ENCODE measurements at regions of chr19 and their contacts with region 1.

Region 1: DNA sequence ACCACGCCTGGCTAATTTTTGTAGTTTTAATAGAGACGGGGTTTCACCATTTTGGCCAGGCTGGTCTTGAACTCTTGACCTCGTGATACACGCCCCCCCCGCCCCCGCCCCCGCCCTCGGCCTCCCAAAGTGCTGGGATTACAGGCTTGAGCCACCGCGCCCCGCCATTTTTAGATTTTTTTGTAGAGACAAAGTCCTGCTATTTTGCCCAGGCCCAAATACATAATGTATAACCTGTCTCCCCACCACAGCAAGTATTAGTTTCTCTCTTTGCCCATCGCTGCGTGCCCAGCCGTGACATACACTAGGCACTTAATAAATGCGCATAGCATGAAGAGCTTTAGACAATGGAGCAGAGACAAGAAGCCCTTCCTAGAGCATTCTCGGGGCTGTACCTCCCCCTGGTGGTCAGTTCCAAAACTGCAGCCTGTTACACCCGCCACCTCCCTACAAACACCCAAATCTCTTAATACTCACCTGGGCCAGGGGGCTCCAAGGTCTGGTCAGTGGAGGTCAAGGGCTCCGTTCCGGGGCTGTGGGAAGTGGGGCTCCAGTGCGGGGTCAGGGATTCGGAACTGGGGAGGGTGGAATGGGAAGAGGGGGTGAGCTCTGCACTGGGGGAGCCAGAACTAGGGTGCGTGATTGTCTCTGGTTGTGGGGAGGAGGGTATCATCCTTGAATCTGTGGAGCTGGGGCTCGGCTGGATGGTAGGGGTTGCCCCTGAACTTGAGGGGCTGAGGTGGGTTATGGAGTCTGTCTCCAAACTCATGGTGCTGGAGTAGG is 22.5 kb downstream of the IQCN start:
- DNase-seq: peak; percentile 88
- H3K4me3 Mint-ChIP-seq: no peak overlapping the region
- H3K27ac Mint-ChIP-seq: peak overlapping the region; percentile 6
- H3K4me1 Mint-ChIP-seq: peaks cover 4% of the 10 kb centered on the region
- H3K27me3 Mint-ChIP-seq: peaks cover 14% of the 10 kb centered on the region

Region 2: GRCh38 chr19:18192673-18193387 is 58.9 kb before region 1 on chr19 and contains the start of gene MPV17L2:
- CTCF ChIA-PET with region 1: interaction called, 23 read pairs
- POLR2A ChIA-PET with region 1: interaction called, 3 read pairs
- intact Hi-C with region 1: no loop called
- DNase-seq: peak; percentile 99
- H3K4me3 Mint-ChIP-seq: peak within 1 kb of the TSS; percentile 86
- H3K27ac Mint-ChIP-seq: peak within 1 kb of the TSS; percentile 87
- H3K4me1 Mint-ChIP-seq: peaks cover 21% of the 10 kb centered on the region
- H3K27me3 Mint-ChIP-seq: no peaks in the 10 kb centered on the region
- total RNA-seq, gene MPV17L2: 6.4 to 7.3 TPM

Region 3: GRCh38 chr19:18233224-18233825 is 18.5 kb before region 1 on chr19:
- CTCF ChIA-PET with region 1: interaction called, 23 read pairs
- POLR2A ChIA-PET with region 1: no interaction called
- intact Hi-C with region 1: no loop called
- DNase-seq: peak; percentile 67
- H3K4me3 Mint-ChIP-seq: no peak overlapping the region
- H3K27ac Mint-ChIP-seq: no peak overlapping the region
- H3K4me1 Mint-ChIP-seq: peaks cover 3% of the 10 kb centered on the region
- H3K27me3 Mint-ChIP-seq: peaks cover 56% of the 10 kb centered on the region

Region 4: DNA sequence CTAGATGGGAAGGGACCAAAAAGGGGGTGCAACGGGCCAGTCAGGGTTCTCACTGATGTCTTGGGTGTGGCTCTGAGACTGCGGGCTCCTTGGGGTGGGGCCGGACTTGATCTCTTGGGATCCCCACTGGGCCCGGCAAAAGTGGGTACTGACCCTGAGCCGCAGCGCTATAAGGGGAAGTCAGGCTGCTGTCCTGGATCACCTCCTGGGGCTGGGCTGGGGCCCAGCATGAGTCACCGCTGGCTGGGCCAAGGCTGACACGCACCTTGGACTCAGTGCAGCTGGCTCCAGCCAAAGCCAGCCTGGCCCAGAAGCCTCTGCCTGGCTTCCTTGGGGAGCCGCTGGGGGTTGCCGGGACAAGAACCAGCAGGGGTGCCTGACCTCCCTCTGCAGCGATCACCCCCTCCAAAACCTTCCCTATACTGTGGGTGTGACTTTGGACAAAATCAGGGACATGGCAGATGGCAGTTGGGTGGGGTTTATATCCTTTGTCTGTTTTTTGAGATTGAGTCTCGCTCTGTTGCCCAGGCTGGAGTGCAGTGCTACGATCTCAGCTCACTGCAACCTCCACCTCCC is 23.1 kb after region 1 on chr19:
- CTCF ChIA-PET with region 1: interaction called, 12 read pairs
- POLR2A ChIA-PET with region 1: interaction called, 4 read pairs
- intact Hi-C with region 1: no loop called
- DNase-seq: no peak
- H3K4me3 Mint-ChIP-seq: no peak overlapping the region
- H3K27ac Mint-ChIP-seq: peak overlapping the region; percentile 23
- H3K4me1 Mint-ChIP-seq: peaks cover 34% of the 10 kb centered on the region
- H3K27me3 Mint-ChIP-seq: no peaks in the 10 kb centered on the region